Activated CD8-positive, alpha-beta memory T cell treated with anti-CD3 and anti-CD28 coated beads, Interleukin-2, amount 10 ng/mL, durations not matched to agents 7 days and 5 days (primary cell): ENCODE measurements at regions of chr1 and their contacts with region 1.

Region 1: GRCh38 chr1:1122078-1122811 is 6.4 kb upstream of the C1orf159 start:
- DNase-seq: peak; percentile 87
- ATAC-seq: peak; percentile 96
- H3K4me3 Mint-ChIP-seq: no peak overlapping the region
- H3K27ac Mint-ChIP-seq: no peak overlapping the region
- H3K4me1 Mint-ChIP-seq: peaks cover 11% of the 10 kb centered on the region
- H3K27me3 Mint-ChIP-seq: peaks cover 18% of the 10 kb centered on the region

Region 2: DNA sequence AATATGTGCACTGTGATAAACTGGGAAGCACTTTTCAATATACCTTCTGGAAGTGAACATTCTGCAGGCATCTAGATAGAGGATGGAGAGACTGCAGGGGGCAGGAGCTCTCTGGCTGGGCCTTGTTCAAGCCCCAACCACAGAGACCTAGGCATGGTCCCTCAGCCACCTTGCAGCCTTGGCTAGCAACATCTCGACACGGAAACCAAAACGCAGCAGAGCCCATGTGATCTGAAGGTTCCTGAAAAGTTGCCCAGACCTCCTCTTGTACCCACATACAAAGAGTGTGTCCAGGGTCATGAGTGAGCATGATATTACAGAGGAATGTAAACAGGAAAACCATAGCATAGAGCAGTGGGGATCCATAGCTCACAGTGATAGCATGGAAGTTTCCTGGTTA is 231.6 kb before region 1 on chr1:
- CTCF ChIA-PET with region 1: no interaction called
- DNase-seq: peak; percentile 72
- ATAC-seq: peak; percentile 89
- H3K4me3 Mint-ChIP-seq: peak overlapping the region; percentile 14
- H3K27ac Mint-ChIP-seq: peak overlapping the region; percentile 76
- H3K4me1 Mint-ChIP-seq: peaks cover 24% of the 10 kb centered on the region
- H3K27me3 Mint-ChIP-seq: peaks cover 52% of the 10 kb centered on the region

Region 3: DNA sequence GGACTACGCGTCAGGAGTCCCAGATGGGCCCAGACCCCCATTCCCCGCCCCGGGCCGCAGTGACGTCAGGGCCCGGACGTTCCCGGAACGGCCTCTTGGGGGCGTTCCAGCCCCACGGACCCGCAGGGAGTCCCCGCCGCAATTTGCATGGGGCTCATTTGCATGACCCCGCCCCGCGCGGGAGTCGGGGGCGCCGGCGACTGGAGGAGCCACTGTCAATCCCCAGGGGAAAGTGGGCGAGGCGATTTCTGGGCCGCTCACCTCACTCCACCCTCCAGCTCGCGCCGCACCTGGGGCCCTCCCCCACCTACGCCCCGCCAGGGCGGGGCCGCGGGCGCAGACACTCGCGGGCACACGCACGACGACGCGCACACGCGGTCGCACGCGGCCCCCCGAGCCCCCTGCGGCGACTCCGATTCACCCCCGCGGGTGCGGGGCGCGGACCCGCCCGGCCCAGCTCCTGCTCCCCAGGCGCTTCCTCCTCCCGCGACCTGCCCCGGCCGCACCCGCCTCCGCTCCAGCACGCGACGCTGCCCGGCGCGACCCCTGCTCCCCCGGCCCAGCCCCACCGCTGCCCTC is 89.1 kb before region 1 on chr1:
- CTCF ChIA-PET with region 1: interaction called, 16 read pairs
- DNase-seq: peak; percentile 94
- ATAC-seq: peak; percentile 94
- H3K4me3 Mint-ChIP-seq: no peak overlapping the region
- H3K27ac Mint-ChIP-seq: no peak overlapping the region
- H3K4me1 Mint-ChIP-seq: peaks cover 12% of the 10 kb centered on the region
- H3K27me3 Mint-ChIP-seq: peaks cover 16% of the 10 kb centered on the region

Region 4: GRCh38 chr1:1212780-1213344 is 90.6 kb after region 1 on chr1:
- CTCF ChIA-PET with region 1: interaction called, 24 read pairs
- DNase-seq: peak; percentile 84
- ATAC-seq: peak; percentile 32
- H3K4me3 Mint-ChIP-seq: no peak overlapping the region
- H3K27ac Mint-ChIP-seq: no peak overlapping the region
- H3K4me1 Mint-ChIP-seq: peaks cover 47% of the 10 kb centered on the region
- H3K27me3 Mint-ChIP-seq: no peaks in the 10 kb centered on the region

Region 5: GRCh38 chr1:1231400-1232223 is 109.4 kb after region 1 on chr1 and contains the start of gene SDF4:
- CTCF ChIA-PET with region 1: interaction called, 43 read pairs
- DNase-seq: peak; percentile 97
- ATAC-seq: peak; percentile 96
- H3K4me3 Mint-ChIP-seq: peak within 1 kb of the TSS; percentile 91
- H3K27ac Mint-ChIP-seq: peak within 1 kb of the TSS; percentile 87
- H3K4me1 Mint-ChIP-seq: peaks cover 30% of the 10 kb centered on the region
- H3K27me3 Mint-ChIP-seq: no peaks in the 10 kb centered on the region
- total RNA-seq, gene SDF4: 109 to 144 TPM

Region 6: DNA sequence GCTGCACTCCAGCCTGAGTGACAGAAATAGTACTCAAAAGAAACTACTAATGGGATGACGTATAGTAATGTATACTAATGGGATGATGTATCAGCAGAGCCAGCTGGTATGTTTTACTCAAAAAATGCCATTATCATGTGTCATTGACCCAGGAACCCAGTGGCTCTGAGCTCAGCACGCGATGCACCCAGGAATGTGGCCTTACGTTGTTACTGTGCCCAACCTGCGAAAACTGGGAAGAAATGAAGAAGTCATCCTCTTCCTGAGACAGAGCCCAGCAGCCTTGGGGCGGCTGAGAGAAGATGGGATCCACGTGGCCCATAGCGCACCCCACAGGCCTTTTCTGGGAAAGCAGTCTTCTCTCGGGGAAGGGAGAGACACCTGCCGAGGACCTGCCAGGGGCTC is 142.6 kb after region 1 on chr1:
- CTCF ChIA-PET with region 1: interaction called, 11 read pairs
- DNase-seq: no peak
- ATAC-seq: no peak
- H3K4me3 Mint-ChIP-seq: no peak overlapping the region
- H3K27ac Mint-ChIP-seq: no peak overlapping the region
- H3K4me1 Mint-ChIP-seq: peaks cover 12% of the 10 kb centered on the region
- H3K27me3 Mint-ChIP-seq: no peaks in the 10 kb centered on the region

Region 7: GRCh38 chr1:1291548-1292441 is 169.6 kb after region 1 on chr1:
- CTCF ChIA-PET with region 1: interaction called, 58 read pairs
- DNase-seq: peak; percentile 74
- ATAC-seq: peak; percentile 72
- H3K4me3 Mint-ChIP-seq: no peak overlapping the region
- H3K27ac Mint-ChIP-seq: no peak overlapping the region
- H3K4me1 Mint-ChIP-seq: no peaks in the 10 kb centered on the region
- H3K27me3 Mint-ChIP-seq: no peaks in the 10 kb centered on the region

Region 8: DNA sequence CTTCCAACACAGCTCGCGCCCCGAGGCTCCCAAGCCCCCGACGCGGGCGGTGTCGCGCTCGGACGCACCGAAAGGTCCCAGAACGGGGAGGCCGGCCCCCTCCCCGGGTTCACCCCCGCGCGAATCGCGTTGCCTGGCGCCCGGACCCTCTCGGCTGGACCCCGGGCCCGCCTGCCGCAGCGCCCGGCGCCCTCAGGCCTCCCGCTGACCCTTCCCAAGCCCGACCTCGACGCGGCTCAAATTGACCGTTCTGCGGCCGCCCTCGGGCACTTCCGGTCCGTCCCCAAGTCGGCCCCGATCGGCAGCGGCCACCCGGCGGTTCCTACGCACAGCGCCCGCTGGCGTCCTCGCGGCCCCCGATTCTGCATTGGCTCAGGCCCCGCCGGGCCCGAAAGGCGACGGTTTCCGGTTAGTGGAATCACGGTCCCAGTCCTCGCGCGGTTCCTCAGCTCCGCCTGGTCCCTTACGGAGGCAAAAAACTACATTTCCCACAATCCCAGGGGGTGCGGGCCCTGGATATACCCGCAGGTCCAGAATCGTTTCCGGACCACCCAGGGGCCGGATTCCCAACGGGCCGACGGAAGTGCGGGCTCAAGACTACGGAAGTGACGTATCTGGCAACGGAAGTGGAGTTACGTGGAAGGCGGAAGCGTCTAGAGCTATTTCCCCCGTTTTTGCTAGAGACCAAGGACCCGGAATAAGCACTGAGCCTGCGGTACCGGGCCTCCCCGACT is 252.9 kb after region 1 on chr1 and contains the start of gene AURKAIP1:
- CTCF ChIA-PET with region 1: interaction called, 14 read pairs
- DNase-seq: peak; percentile 99
- ATAC-seq: peak; percentile 87
- H3K4me3 Mint-ChIP-seq: peak within 1 kb of the TSS; percentile 84
- H3K27ac Mint-ChIP-seq: peak within 1 kb of the TSS; percentile 96
- H3K4me1 Mint-ChIP-seq: peaks cover 42% of the 10 kb centered on the region
- H3K27me3 Mint-ChIP-seq: no peaks in the 10 kb centered on the region
- total RNA-seq, gene AURKAIP1: 139 to 141 TPM